IMR-90 (cell line): ENCODE measurements at regions of chr6 and their contacts with region 1.

Region 1: GRCh38 chr6:135291288-135292116 is 110.4 kb downstream of the MYB start:
- DNase-seq: peak; percentile 24
- ATAC-seq: no peak
- H3K4me3 ChIP-seq: no peak overlapping the region
- H3K27ac ChIP-seq: no peak overlapping the region
- H3K4me1 ChIP-seq: peaks cover 2% of the 10 kb centered on the region; the same call in 1 of the 2 replicates
- H3K27me3 ChIP-seq: no peaks in the 10 kb centered on the region
- CTCF ChIP-seq: no peak
- POLR2A ChIP-seq: no peak
- RAD21 ChIP-seq: no peak

Region 2: DNA sequence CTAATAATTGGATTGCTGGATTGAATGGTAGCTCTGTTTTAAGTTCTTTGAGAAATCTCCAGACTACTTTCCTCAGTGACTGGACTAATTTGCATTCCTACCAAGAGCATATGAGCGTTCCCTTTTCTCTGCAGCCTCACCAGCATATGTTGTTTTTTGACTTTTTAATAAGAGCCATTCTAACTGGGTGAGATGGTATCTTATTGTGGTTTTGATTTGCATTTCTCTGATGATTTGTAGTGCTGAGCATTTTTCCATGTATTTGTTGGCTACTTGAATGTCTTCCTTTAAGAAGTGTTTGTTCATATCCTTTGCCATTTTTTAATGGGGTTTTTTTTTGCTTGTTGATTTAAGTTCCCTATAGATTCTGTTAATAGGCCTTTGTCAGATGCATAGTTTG is 300.8 kb after region 1 on chr6:
- CTCF ChIA-PET with region 1: no interaction called
- POLR2A ChIA-PET with region 1: no interaction called
- dilution Hi-C with region 1: no loop called
- in situ Hi-C with region 1: no loop called
- intact Hi-C with region 1: loop called (anchors 5 kb)
- DNase-seq: no peak
- ATAC-seq: no peak
- H3K4me3 ChIP-seq: no peak overlapping the region
- H3K27ac ChIP-seq: no peak overlapping the region
- H3K4me1 ChIP-seq: no peaks in the 10 kb centered on the region
- H3K27me3 ChIP-seq: no peaks in the 10 kb centered on the region
- CTCF ChIP-seq: no peak
- POLR2A ChIP-seq: no peak
- RAD21 ChIP-seq: no peak